ENCODE measurements at regions of chr5 and their contacts with region 1.

Region 1: GRCh38 chr5:43631182-43631910 is 28.4 kb downstream of the NNT start:
- DNase-seq: peak in 1 of 2 donors; percentile 38
- H3K4me3 ChIP-seq: no peak overlapping the region
- H3K27ac ChIP-seq: peak overlapping the region; percentile 9 to 77
- H3K4me1 ChIP-seq: peaks cover 0 to 57% (median 26%) of the 10 kb centered on the region in 4 donors
- H3K27me3 ChIP-seq: no peaks in the 10 kb centered on the region
- CTCF ChIP-seq: peak; percentile 70 to 73

Region 2: GRCh38 chr5:43680286-43680685 is 48.9 kb after region 1 on chr5:
- intact Hi-C with region 1: loop called (anchors 5 kb)
- DNase-seq: no peak
- H3K4me3 ChIP-seq: no peak overlapping the region
- H3K27ac ChIP-seq: peak overlapping the region; percentile 19 to 47
- H3K4me1 ChIP-seq: peaks cover 0 to 76% (median 24%) of the 10 kb centered on the region in 4 donors
- H3K27me3 ChIP-seq: no peaks in the 10 kb centered on the region
- CTCF ChIP-seq: no peak

Region 3: DNA sequence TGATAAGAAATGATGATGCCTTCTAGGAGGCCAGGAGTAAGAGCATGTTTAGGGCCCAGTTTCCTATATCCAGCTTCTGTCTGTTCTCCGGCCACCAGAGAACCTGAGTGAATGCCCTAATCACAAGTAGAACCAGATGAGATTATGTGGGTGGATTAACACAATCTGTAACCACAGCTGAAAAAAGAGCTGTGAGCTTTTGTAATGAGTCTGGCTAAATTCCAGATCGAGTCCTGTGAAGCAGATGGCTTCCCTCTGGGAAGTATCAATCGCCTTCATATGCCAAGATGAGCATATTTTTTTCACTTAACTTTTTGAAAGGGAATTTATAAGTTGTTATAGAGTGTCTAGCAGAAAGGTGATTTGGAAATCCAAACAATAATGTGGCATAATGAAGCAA is 71.5 kb after region 1 on chr5:
- intact Hi-C with region 1: no loop called
- DNase-seq: no peak
- H3K4me3 ChIP-seq: no peak overlapping the region
- H3K27ac ChIP-seq: no peak overlapping the region
- H3K4me1 ChIP-seq: peaks cover 0 to 4% (median 0%) of the 10 kb centered on the region in 4 donors
- H3K27me3 ChIP-seq: no peaks in the 10 kb centered on the region
- CTCF ChIP-seq: no peak

Region 4: GRCh38 chr5:44329716-44330115 is 698.4 kb after region 1 on chr5:
- intact Hi-C with region 1: loop called (anchors 2 kb)
- DNase-seq: no peak
- H3K4me3 ChIP-seq: no peak overlapping the region
- H3K27ac ChIP-seq: no peak overlapping the region
- H3K4me1 ChIP-seq: peaks cover 0 to 8% (median 0%) of the 10 kb centered on the region in 4 donors
- H3K27me3 ChIP-seq: no peaks in the 10 kb centered on the region
- CTCF ChIP-seq: no peak

Region 5: DNA sequence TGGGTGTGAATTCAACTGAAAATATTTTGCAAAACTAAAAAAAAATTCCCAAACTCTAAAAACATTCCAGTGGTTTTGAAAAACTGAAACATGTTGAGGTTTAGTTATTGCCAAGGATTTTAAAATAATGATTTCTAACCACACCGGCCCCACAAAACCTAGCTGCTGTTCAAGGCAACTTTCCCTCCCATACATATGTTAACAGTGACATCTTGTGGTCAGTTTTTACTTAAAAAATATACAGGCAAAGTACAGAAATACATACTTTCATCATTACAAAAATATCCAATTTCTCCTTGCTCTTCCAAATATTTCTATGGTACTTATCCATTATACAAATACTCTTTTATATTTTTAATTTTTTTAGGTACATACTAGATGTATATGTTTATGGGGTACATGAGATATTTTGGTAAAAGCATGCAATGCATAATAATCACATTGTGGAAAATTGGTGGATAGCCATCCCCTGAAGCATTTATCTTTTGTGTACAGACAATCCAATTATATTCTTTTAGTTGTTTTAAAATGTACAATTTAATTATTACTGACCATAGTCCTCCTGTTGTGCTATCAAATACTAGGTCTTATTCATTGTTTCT is 1143.0 kb after region 1 on chr5:
- intact Hi-C with region 1: loop called (anchors 10 kb)
- DNase-seq: no peak
- H3K4me3 ChIP-seq: no peak overlapping the region
- H3K27ac ChIP-seq: no peak overlapping the region
- H3K4me1 ChIP-seq: no peaks in the 10 kb centered on the region
- H3K27me3 ChIP-seq: no peaks in the 10 kb centered on the region
- CTCF ChIP-seq: peak; percentile 49 to 61